GM12878 (cell line): ENCODE measurements at regions of chr9 and their contacts with region 1.

Region 1: GRCh38 chr9:97921959-97922724 is at the start of gene TRMO:
- DNase-seq: peak; percentile 98
- ATAC-seq: peak; percentile 90
- H3K4me3 ChIP-seq: peak within 1 kb of the TSS; percentile 62
- H3K27ac ChIP-seq: peak within 1 kb of the TSS; percentile 83
- H3K4me1 ChIP-seq: peaks cover 9% of the 10 kb centered on the region
- H3K27me3 ChIP-seq: no peaks in the 10 kb centered on the region
- CTCF ChIP-seq: peak; percentile 64 to 89 (median 69)
- EP300 ChIP-seq: peak; percentile 72 to 73; a peak in 2 of 4 replicates
- POLR2A ChIP-seq: peak; percentile 89
- RAD21 ChIP-seq: peak; percentile 23
- polyA plus RNA-seq, gene TRMO: 5.8 to 7.7 TPM

Region 2: GRCh38 chr9:97696803-97697601 is 225.1 kb before region 1 on chr9 and contains the start of gene XPA:
- CTCF ChIA-PET with region 1: interaction called, 13 read pairs
- POLR2A ChIA-PET with region 1: no interaction called
- RAD21 ChIA-PET with region 1: interaction called, 6 read pairs
- SMC1A ChIA-PET with region 1: no interaction called
- in situ Hi-C with region 1: no loop called
- intact Hi-C with region 1: no loop called
- DNase-seq: peak; percentile 80
- ATAC-seq: peak; percentile 94
- H3K4me3 ChIP-seq: peak within 1 kb of the TSS; percentile 92
- H3K27ac ChIP-seq: peak within 1 kb of the TSS; percentile 85
- H3K4me1 ChIP-seq: peaks cover 18% of the 10 kb centered on the region
- H3K27me3 ChIP-seq: no peaks in the 10 kb centered on the region
- CTCF ChIP-seq: no peak
- EP300 ChIP-seq: no peak
- POLR2A ChIP-seq: peak; percentile 95
- RAD21 ChIP-seq: no peak
- polyA plus RNA-seq, gene XPA: 7.1 to 11.2 TPM

Region 3: DNA sequence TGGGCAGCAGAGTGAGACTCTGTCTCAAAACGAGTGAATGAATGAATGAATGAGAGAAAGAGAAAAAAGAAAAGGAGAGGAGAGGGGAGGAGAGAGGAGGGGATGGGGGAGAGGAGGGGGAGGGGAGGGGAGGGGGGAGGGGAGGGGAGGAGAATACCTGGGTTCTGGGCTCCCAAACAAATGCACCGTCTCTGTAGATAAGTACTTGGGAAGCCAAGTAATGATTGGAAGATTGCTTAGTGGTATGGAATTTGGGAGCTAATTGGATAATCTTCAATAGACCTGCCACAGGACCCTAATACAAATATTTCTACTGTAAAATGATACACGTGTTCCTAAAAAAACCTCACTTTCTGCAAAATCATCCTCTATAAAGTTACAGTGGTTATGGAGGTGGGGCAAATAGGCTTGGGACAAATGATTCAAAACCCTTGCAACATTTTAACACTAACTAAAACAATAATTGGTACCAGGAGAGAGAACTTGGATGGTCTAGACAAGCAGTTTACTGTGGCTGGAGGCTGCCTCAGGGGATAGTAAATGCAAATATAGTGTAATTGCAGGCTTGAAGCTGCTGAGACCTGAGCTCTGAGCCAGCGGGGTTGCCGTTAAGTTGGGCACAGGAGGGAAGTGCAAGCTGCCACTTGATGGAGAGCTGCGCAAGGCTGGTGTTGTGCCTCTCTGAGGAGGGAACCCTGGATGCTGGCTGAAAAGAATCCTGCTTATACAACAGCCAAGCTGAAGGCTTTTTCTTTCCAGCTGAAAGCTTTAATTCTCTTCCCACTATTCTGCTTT is 12.4 kb after region 1 on chr9:
- CTCF ChIA-PET with region 1: interaction called, 21 read pairs
- POLR2A ChIA-PET with region 1: no interaction called
- RAD21 ChIA-PET with region 1: interaction called, 3 read pairs
- SMC1A ChIA-PET with region 1: interaction called, 9 read pairs
- in situ Hi-C with region 1: no loop called
- intact Hi-C with region 1: no loop called
- DNase-seq: no peak
- ATAC-seq: 0 out of 3 replicates have a peak, but pooled peaks have one; percentile 16
- H3K4me3 ChIP-seq: no peak overlapping the region
- H3K27ac ChIP-seq: no peak overlapping the region
- H3K4me1 ChIP-seq: peaks cover 7% of the 10 kb centered on the region; the same call in 1 of the 2 replicates
- H3K27me3 ChIP-seq: no peaks in the 10 kb centered on the region
- CTCF ChIP-seq: no peak
- EP300 ChIP-seq: no peak
- POLR2A ChIP-seq: no peak
- RAD21 ChIP-seq: no peak

Region 4: GRCh38 chr9:97982683-97983588 is 60.8 kb after region 1 on chr9 and contains the start of gene ANP32B:
- CTCF ChIA-PET with region 1: interaction called, 29 read pairs
- POLR2A ChIA-PET with region 1: interaction called, 5 read pairs
- RAD21 ChIA-PET with region 1: interaction called, 17 read pairs
- SMC1A ChIA-PET with region 1: interaction called, 4 read pairs
- in situ Hi-C with region 1: no loop called
- intact Hi-C with region 1: loop called (anchors 2 kb)
- DNase-seq: peak; percentile 44
- ATAC-seq: peak; percentile 88
- H3K4me3 ChIP-seq: peak within 1 kb of the TSS; percentile 90
- H3K27ac ChIP-seq: peak within 1 kb of the TSS; percentile 99
- H3K4me1 ChIP-seq: peaks cover 18% of the 10 kb centered on the region
- H3K27me3 ChIP-seq: no peaks in the 10 kb centered on the region
- CTCF ChIP-seq: peak; percentile 76 to 84 (median 83); a peak in 5 of 6 replicates
- EP300 ChIP-seq: no peak
- POLR2A ChIP-seq: peak; percentile 78
- RAD21 ChIP-seq: peak; percentile 39; the same call in 1 of the 2 replicates
- polyA plus RNA-seq, gene ANP32B: 85.9 to 204 TPM

Region 5: DNA sequence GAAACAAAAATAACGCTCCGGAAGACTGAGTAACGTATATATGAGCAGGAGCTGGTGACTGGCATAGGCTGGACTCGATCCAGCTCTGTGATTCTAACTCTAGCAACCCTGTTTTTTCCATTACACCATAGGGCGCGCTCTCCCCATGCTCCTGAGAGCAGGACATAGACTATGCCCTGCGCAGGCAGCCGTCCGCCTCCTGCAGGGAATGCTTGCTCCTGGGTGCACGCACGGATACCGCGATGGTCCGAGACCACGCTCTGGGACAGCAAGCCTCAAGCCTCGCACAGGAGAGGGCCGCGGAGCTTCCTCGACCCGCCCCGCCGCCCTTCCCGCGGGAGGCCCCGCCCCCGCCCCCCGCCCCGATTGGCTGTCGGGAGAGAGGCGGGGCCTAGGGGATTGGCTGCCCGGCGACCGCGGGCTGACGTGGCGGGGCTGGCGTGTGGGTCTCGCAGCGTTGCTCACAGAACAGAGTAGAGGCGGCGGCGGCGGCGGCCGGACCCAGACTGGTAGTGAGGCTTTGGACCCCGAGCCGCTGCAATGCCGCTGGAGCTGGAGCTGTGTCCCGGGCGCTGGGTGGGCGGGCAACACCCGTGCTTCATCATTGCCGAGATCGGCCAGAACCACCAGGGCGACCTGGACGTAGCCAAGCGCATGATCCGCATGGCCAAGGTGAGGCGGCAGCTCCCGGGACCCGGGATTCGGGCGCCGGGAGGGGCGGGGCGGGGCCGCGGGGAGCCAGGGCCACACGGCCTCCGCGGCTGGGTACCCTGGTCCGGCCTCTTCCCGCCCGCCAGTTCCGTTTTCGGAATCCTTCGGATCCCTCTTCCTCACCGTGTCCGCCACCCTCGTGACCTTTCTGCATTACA is 134.4 kb after region 1 on chr9 and contains the start of gene NANS:
- CTCF ChIA-PET with region 1: interaction called, 11 read pairs
- POLR2A ChIA-PET with region 1: interaction called, 24 read pairs
- RAD21 ChIA-PET with region 1: interaction called, 8 read pairs
- SMC1A ChIA-PET with region 1: interaction called, 17 read pairs
- in situ Hi-C with region 1: no loop called
- intact Hi-C with region 1: no loop called
- DNase-seq: no peak
- ATAC-seq: peak; percentile 97
- H3K4me3 ChIP-seq: peak within 1 kb of the TSS; percentile 77
- H3K27ac ChIP-seq: peak within 1 kb of the TSS; percentile 84
- H3K4me1 ChIP-seq: peaks cover 3% of the 10 kb centered on the region; the same call in 1 of the 2 replicates
- H3K27me3 ChIP-seq: no peaks in the 10 kb centered on the region
- CTCF ChIP-seq: no peak
- EP300 ChIP-seq: no peak
- POLR2A ChIP-seq: peak; percentile 99
- RAD21 ChIP-seq: no peak
- polyA plus RNA-seq, gene NANS: 21.0 to 26.1 TPM

Region 6: GRCh38 chr9:98207606-98208005 is 285.5 kb after region 1 on chr9:
- CTCF ChIA-PET with region 1: interaction called, 26 read pairs
- POLR2A ChIA-PET with region 1: no interaction called
- RAD21 ChIA-PET with region 1: no interaction called
- SMC1A ChIA-PET with region 1: interaction called, 3 read pairs
- in situ Hi-C with region 1: no loop called
- intact Hi-C with region 1: no loop called
- DNase-seq: no peak
- ATAC-seq: no peak
- H3K4me3 ChIP-seq: no peak overlapping the region
- H3K27ac ChIP-seq: no peak overlapping the region
- H3K4me1 ChIP-seq: no peaks in the 10 kb centered on the region; the same call in 1 of the 2 replicates
- H3K27me3 ChIP-seq: no peaks in the 10 kb centered on the region; a peak in 1 of 4 replicates
- CTCF ChIP-seq: no peak
- EP300 ChIP-seq: no peak
- POLR2A ChIP-seq: no peak
- RAD21 ChIP-seq: no peak